Naive thymus-derived CD4-positive, alpha-beta T cell (primary cell): ENCODE measurements at regions of chr16 and their contacts with region 1.

Region 1: GRCh38 chr16:78778101-78779004 is 678.9 kb downstream of the WWOX start:
- DNase-seq: peak in 1 of 9 donors; percentile 55
- ATAC-seq: no peak
- H3K4me3 ChIP-seq: no peak overlapping the region
- H3K4me3 Mint-ChIP-seq: peak overlapping the region in 1 of 10 donors; percentile 76
- H3K27ac ChIP-seq: no peak overlapping the region
- H3K27ac Mint-ChIP-seq: peak overlapping the region in 1 of 9 donors; percentile 94
- H3K4me1 ChIP-seq: no peaks in the 10 kb centered on the region
- H3K4me1 Mint-ChIP-seq: peaks cover 0 to 52% (median 0%) of the 10 kb centered on the region in 7 donors
- H3K27me3 ChIP-seq: no peaks in the 10 kb centered on the region
- H3K27me3 Mint-ChIP-seq: no peaks in the 10 kb centered on the region

Region 2: DNA sequence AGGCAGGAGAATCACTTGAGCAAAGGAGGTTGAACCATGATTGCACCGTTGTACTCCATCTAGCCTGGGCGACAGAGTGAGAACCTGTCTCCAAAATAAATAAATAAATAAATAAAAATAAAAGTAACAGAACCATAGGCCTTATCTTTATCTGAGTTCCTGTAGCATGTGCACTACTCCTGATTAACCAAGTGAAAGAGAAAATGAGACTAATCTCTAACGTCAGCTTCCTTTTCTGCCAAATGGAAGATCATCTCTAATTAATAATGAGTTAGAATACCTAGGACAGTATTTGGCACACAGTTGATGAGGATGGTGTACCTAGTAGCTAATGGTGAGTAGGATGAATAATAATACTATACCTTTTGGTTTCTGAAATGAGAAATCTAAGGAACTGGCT is 158.5 kb before region 1 on chr16:
- CTCF ChIA-PET with region 1: no interaction called
- POLR2A ChIA-PET with region 1: no interaction called
- intact Hi-C with region 1: no loop called
- DNase-seq: no peak
- ATAC-seq: no peak
- H3K4me3 ChIP-seq: no peak overlapping the region
- H3K4me3 Mint-ChIP-seq: no peak overlapping the region
- H3K27ac ChIP-seq: no peak overlapping the region
- H3K27ac Mint-ChIP-seq: no peak overlapping the region
- H3K4me1 ChIP-seq: no peaks in the 10 kb centered on the region
- H3K4me1 Mint-ChIP-seq: peaks cover 0 to 2% (median 0%) of the 10 kb centered on the region in 7 donors
- H3K27me3 ChIP-seq: no peaks in the 10 kb centered on the region
- H3K27me3 Mint-ChIP-seq: no peaks in the 10 kb centered on the region

Region 3: GRCh38 chr16:78742501-78743283 is 35.7 kb before region 1 on chr16:
- CTCF ChIA-PET with region 1: no interaction called
- POLR2A ChIA-PET with region 1: no interaction called
- intact Hi-C with region 1: loop called in 1 of 2 experiments (anchors 1 kb)
- DNase-seq: peak; percentile 27 to 72 (median 46)
- ATAC-seq: peak; percentile 93
- H3K4me3 ChIP-seq: peak overlapping the region; percentile 62
- H3K4me3 Mint-ChIP-seq: peak overlapping the region; percentile 61 to 84 (median 77)
- H3K27ac ChIP-seq: peak overlapping the region; percentile 73
- H3K27ac Mint-ChIP-seq: peak overlapping the region; percentile 86 to 98 (median 93)
- H3K4me1 ChIP-seq: peaks cover 12 to 22% of the 10 kb centered on the region in 2 donors
- H3K4me1 Mint-ChIP-seq: peaks cover 5 to 23% (median 20%) of the 10 kb centered on the region in 7 donors
- H3K27me3 ChIP-seq: no peaks in the 10 kb centered on the region
- H3K27me3 Mint-ChIP-seq: no peaks in the 10 kb centered on the region

Region 4: GRCh38 chr16:78894886-78895285 is 116.5 kb after region 1 on chr16:
- CTCF ChIA-PET with region 1: no interaction called
- POLR2A ChIA-PET with region 1: no interaction called
- intact Hi-C with region 1: loop called in 1 of 2 experiments (anchors 2 kb)
- DNase-seq: no peak
- ATAC-seq: peak; percentile 40
- H3K4me3 ChIP-seq: no peak overlapping the region
- H3K4me3 Mint-ChIP-seq: no peak overlapping the region
- H3K27ac ChIP-seq: no peak overlapping the region
- H3K27ac Mint-ChIP-seq: peak overlapping the region in 2 of 9 donors; percentile 9 to 31
- H3K4me1 ChIP-seq: peaks cover 0 to 28% of the 10 kb centered on the region in 2 donors
- H3K4me1 Mint-ChIP-seq: peaks cover 7 to 25% (median 16%) of the 10 kb centered on the region in 7 donors
- H3K27me3 ChIP-seq: no peaks in the 10 kb centered on the region
- H3K27me3 Mint-ChIP-seq: no peaks in the 10 kb centered on the region

Region 5: DNA sequence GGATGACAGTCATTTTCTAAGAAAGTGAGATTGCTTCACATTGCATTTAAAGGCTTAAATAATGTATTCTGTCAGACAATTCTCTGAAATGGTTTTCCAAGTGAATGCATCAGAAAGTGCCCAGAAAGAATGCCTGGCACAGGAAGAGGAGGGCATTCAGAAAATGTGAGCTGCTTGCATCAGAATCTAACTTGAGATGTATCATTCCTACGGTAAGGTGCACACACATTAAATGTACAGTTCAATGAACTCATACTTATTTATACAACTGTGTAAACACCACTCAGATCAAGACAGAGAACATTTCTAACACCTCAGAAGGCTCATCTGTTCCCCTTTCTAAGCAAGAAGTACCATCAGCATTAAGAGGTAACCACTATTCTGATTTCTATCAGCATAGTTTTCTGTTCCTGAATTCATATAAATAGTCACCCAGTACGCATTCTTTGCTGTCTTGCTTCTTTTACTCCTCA is 184.1 kb after region 1 on chr16:
- CTCF ChIA-PET with region 1: no interaction called
- POLR2A ChIA-PET with region 1: no interaction called
- intact Hi-C with region 1: loop called in 1 of 2 experiments (anchors 5 kb)
- DNase-seq: no peak
- ATAC-seq: no peak
- H3K4me3 ChIP-seq: no peak overlapping the region
- H3K4me3 Mint-ChIP-seq: peak overlapping the region in 1 of 10 donors; percentile 27
- H3K27ac ChIP-seq: no peak overlapping the region
- H3K27ac Mint-ChIP-seq: no peak overlapping the region
- H3K4me1 ChIP-seq: no peaks in the 10 kb centered on the region
- H3K4me1 Mint-ChIP-seq: peaks cover 0 to 13% (median 0%) of the 10 kb centered on the region in 7 donors
- H3K27me3 ChIP-seq: no peaks in the 10 kb centered on the region
- H3K27me3 Mint-ChIP-seq: no peaks in the 10 kb centered on the region